Left ventricle myocardium superior (tissue), 1 donor: ENCODE measurements at regions of chr1 and their contacts with region 1.

Region 1: DNA sequence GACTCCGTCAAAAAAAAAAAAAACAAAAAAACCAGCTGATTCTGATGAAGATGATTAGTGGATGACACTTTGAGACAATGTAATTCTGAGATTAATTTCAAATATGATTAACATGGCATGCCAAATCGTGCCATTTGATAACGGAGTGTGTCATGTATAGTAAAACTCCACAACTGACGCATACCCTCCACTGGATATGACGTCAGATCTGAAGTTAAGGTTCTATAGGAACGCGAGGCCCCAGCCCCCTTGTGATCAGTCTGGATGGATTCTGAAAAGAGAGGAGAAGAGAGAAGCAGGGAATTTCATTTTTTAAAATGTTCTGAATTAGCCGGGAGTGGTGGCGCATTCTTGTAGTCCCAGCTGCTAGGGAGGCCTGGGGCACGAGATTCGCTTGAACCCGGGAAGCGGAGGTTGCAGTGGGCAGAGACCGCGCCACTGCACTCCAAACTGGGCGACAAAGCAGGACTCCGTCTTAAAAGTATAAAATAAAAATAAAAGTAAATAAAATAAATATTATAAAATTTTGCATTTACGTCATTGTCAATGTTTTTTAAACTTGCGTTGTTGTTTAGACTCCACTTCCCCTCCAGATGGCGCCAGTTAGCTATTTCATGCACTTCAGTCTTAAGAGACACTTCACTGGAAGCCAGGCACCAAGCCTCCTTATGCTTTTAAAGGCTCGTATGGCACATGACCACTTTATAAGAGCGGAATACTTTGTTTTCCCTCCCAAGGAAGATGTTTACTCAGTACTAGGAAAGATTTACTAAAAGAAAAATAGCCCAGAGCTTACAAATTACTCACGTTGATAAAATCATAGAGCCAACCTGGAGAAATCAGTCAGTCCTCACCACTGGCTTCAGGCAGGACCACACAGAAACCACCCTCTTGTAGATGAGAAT is 65.5 kb downstream of the UBE2U start:
- DNase-seq: peak; percentile 33
- ATAC-seq: peak; percentile 76

Region 2: GRCh38 chr1:64675718-64676345 is 406.9 kb after region 1 on chr1:
- intact Hi-C with region 1: loop called (anchors 10 kb)
- DNase-seq: no peak
- ATAC-seq: no peak